A549 (cell line): ENCODE measurements at regions of chr17 and their contacts with region 1.

Region 1: GRCh38 chr17:36948717-36949460 is at the start of gene AATF:
- DNase-seq: peak; percentile 98 to 99
- ATAC-seq: peak; percentile 92 to 98
- H3K4me3 ChIP-seq: peak within 1 kb of the TSS; percentile 73
- H3K27ac ChIP-seq: peak within 1 kb of the TSS; percentile 90
- H3K4me1 ChIP-seq: peaks cover 25% of the 10 kb centered on the region
- CTCF ChIP-seq: no peak
- EP300 ChIP-seq: no peak
- POLR2A ChIP-seq: peak; percentile 88
- RAD21 ChIP-seq: no peak; a peak in 1 of 5 replicates
- polyA plus RNA-seq, gene AATF: 51.9 and 63.8 TPM in 2 replicates

Region 2: DNA sequence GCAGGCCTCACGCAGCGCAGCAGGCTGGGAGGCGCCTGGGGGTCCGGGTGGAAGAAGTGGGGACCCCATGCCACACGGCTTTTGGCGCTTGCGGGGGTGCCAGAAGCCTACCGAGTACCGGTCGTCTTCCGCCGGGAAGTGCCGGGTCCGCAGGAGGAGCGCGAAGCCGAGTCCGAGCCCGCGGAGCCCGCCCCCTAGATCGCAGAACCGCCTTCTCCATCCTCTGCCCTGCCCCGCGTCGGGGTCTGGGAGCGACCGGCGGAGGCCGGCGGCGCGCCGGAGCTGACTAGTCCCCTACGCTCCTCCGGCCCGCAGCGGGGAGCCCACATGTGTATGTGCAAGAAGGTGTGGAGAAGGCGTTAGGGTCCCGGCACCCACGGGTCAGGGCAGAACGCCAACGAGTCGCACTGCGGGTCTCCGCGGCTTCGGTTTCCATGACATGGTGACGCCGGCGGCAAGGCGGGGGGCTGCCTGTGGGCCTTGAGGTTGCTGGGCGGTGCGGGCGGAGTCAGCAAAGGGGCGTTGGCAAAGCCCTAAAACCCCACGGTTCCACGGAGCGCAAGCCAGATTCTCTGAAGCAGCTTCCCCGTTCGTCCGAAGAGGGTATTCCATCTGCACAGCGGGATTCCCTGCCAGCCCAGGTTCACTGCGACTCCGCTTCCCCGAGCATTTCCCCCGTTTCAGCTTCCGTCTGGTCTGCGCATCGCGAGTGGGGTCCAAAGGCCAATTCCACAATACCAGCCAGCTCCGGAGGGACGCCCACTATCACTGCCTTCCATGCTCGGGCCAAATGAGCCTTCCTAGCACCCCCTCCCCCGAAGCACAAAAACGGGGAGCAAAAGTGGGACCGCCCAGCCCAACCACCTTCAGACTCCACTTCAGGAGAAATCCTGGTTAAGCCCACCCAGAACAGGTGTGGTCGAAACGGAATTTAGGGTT is 13.9 kb before region 1 on chr17:
- CTCF ChIA-PET with region 1: interaction called, 4 read pairs
- POLR2A ChIA-PET with region 1: interaction called, 15 read pairs
- DNase-seq: peak; percentile 69 to 83
- ATAC-seq: peak; percentile 71 to 91
- H3K4me3 ChIP-seq: peak overlapping the region; percentile 59
- H3K27ac ChIP-seq: peak overlapping the region; percentile 71 to 88
- H3K4me1 ChIP-seq: peaks cover 12% of the 10 kb centered on the region
- CTCF ChIP-seq: no peak
- EP300 ChIP-seq: no peak
- POLR2A ChIP-seq: peak; percentile 33
- RAD21 ChIP-seq: no peak